ENCODE measurements at regions of chr17 and their contacts with region 1.

Region 1: GRCh38 chr17:44775136-44775837 is 16.5 kb downstream of the ADAM11 start:
- DNase-seq: peak; percentile 97
- H3K4me3 ChIP-seq: peak overlapping the region; percentile 36 to 51
- H3K27ac ChIP-seq: peak overlapping the region; percentile 31 to 77
- H3K4me1 ChIP-seq: no peaks in the 10 kb centered on the region
- H3K27me3 ChIP-seq: no peaks in the 10 kb centered on the region
- CTCF ChIP-seq: peak in 1 of 4 experiments; percentile 3
- POLR2A ChIP-seq: peak; percentile 36

Region 2: DNA sequence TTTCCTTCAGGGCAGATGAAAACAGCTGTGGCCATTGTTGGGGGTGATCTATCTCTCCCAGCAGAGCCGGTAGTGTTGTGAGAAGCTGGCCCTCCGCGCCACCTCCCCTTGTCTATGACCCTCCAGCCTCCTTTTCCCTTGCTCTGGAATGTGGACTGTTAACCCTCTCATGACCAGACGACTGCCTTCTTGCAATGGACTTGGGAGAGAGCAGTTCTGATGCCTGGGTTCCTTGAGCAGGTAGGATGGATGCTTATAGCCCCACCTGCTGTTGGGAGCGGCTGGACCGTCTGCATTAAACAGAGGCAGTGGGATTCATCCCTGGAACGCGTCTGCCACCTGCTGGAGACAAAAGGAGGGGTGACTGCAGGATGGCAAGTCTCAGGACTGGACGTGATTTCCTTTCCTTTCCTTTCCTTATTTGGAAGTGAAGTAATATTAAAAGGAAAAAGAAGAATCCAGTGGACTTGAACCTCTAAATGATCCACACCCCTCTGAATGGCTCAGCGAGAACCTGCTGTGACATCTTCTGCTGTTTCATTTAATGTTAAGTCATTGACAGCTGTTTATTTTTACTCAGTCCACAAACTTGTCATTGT is 1014.9 kb before region 1 on chr17:
- intact Hi-C with region 1: no loop called
- DNase-seq: peak; percentile 95
- H3K4me3 ChIP-seq: no peak overlapping the region
- H3K27ac ChIP-seq: no peak overlapping the region
- H3K4me1 ChIP-seq: no peaks in the 10 kb centered on the region
- H3K27me3 ChIP-seq: peaks cover 3% of the 10 kb centered on the region
- CTCF ChIP-seq: peak; percentile 97 to 99 (median 98)
- POLR2A ChIP-seq: no peak

Region 3: GRCh38 chr17:44872131-44872768 is 97.0 kb after region 1 on chr17:
- intact Hi-C with region 1: loop called (anchors 2 kb)
- DNase-seq: no peak
- H3K4me3 ChIP-seq: no peak overlapping the region
- H3K27ac ChIP-seq: peak overlapping the region in 1 of 2 donors; percentile 17
- H3K4me1 ChIP-seq: no peaks in the 10 kb centered on the region
- H3K27me3 ChIP-seq: no peaks in the 10 kb centered on the region
- CTCF ChIP-seq: no peak
- POLR2A ChIP-seq: no peak

Region 4: GRCh38 chr17:45021607-45022287 is 246.5 kb after region 1 on chr17:
- intact Hi-C with region 1: loop called (anchors 5 kb)
- DNase-seq: peak; percentile 42
- H3K4me3 ChIP-seq: peak overlapping the region; percentile 15 to 25
- H3K27ac ChIP-seq: peak overlapping the region; percentile 58 to 79
- H3K4me1 ChIP-seq: peaks cover 13% of the 10 kb centered on the region
- H3K27me3 ChIP-seq: no peaks in the 10 kb centered on the region
- CTCF ChIP-seq: peak; percentile 85 to 97 (median 91)
- POLR2A ChIP-seq: no peak

Measured in prostate gland (tissue), 2 donors.